A673 (cell line): ENCODE measurements at regions of chr17 and their contacts with region 1.

Region 1: GRCh38 chr17:7583253-7584109 is at the start of gene MPDU1:
- DNase-seq: peak; percentile 99
- H3K4me3 ChIP-seq: peak within 1 kb of the TSS; percentile 60
- H3K27ac ChIP-seq: peak within 1 kb of the TSS; percentile 99
- H3K4me1 ChIP-seq: peaks cover 50% of the 10 kb centered on the region
- H3K27me3 ChIP-seq: no peaks in the 10 kb centered on the region
- CTCF ChIP-seq: no peak
- total RNA-seq, gene MPDU1: 133 and 149 TPM in 2 replicates

Region 2: GRCh38 chr17:7237761-7238419 is 345.6 kb before region 1 on chr17:
- CTCF ChIA-PET with region 1: no interaction called
- POLR2A ChIA-PET with region 1: interaction called, 12 read pairs
- intact Hi-C with region 1: no loop called
- DNase-seq: peak; percentile 84
- H3K4me3 ChIP-seq: peak overlapping the region; percentile 96
- H3K27ac ChIP-seq: peak overlapping the region; percentile 95
- H3K4me1 ChIP-seq: peaks cover 37% of the 10 kb centered on the region
- H3K27me3 ChIP-seq: no peaks in the 10 kb centered on the region
- CTCF ChIP-seq: no peak

Region 3: GRCh38 chr17:7644775-7645174 is 61.3 kb after region 1 on chr17:
- CTCF ChIA-PET with region 1: no interaction called
- POLR2A ChIA-PET with region 1: no interaction called
- intact Hi-C with region 1: no loop called
- DNase-seq: no peak
- H3K4me3 ChIP-seq: no peak overlapping the region
- H3K27ac ChIP-seq: no peak overlapping the region
- H3K4me1 ChIP-seq: no peaks in the 10 kb centered on the region
- H3K27me3 ChIP-seq: no peaks in the 10 kb centered on the region
- CTCF ChIP-seq: no peak

Region 4: GRCh38 chr17:7716901-7717755 is 133.6 kb after region 1 on chr17 and contains the start of gene DNAH2:
- CTCF ChIA-PET with region 1: no interaction called
- POLR2A ChIA-PET with region 1: no interaction called
- intact Hi-C with region 1: no loop called
- DNase-seq: peak; percentile 97
- H3K4me3 ChIP-seq: peak within 1 kb of the TSS; percentile 61
- H3K27ac ChIP-seq: no peak within 1 kb of the TSS
- H3K4me1 ChIP-seq: peaks cover 18% of the 10 kb centered on the region
- H3K27me3 ChIP-seq: no peaks in the 10 kb centered on the region
- CTCF ChIP-seq: peak; percentile 57
- total RNA-seq, gene DNAH2: 0.15 and 0.24 TPM in 2 replicates

Region 5: GRCh38 chr17:7887482-7888183 is 304.2 kb after region 1 on chr17:
- CTCF ChIA-PET with region 1: no interaction called
- POLR2A ChIA-PET with region 1: no interaction called
- intact Hi-C with region 1: loop called (anchors 5 kb)
- DNase-seq: peak; percentile 99
- H3K4me3 ChIP-seq: peak overlapping the region; percentile 87
- H3K27ac ChIP-seq: peak overlapping the region; percentile 96
- H3K4me1 ChIP-seq: peaks cover 37% of the 10 kb centered on the region
- H3K27me3 ChIP-seq: no peaks in the 10 kb centered on the region
- CTCF ChIP-seq: no peak

Region 6: DNA sequence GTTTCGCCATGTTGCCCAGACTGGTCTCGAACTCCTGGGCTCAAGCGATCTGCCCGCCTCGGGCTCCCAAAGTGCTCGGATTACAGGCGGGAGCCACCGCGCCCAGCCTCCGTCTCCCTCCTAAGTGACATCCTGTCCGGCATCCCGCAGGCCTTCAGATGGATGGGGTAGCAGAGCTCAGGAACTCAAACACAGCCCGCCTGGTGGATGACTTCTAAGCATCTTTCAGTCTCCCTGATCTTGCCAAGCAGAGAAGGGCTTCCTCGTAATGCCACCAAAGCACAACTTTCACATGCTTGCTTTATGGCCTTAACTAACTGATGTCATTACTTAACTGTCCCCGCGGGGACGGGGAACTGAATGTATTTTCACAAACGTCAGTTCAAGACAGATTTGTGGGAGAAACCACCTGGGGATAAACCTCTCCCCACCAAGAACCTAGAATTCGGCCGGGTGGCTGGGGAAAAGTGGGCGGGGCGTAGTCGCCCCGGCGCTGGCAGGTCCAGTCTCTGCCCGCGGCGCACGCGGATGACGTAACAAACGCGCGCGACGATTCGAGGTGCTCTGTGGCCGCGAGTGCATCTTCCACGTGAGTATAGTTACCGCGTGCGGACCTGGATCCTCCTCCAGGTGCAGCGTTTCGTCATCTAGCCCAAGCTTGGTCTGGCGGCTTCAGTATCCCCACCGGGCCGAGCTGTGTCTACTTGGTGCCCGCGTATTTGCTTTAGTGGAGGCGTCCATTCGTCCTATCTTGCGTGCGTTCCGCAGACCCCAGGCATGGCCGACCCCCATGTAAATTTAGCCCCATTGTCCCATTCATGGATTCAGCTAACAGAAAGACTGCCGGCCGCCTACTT is 665.5 kb after region 1 on chr17 and contains the start of gene PFAS:
- CTCF ChIA-PET with region 1: no interaction called
- POLR2A ChIA-PET with region 1: interaction called, 12 read pairs
- intact Hi-C with region 1: no loop called
- DNase-seq: peak; percentile 96
- H3K4me3 ChIP-seq: peak within 1 kb of the TSS; percentile 83
- H3K27ac ChIP-seq: peak within 1 kb of the TSS; percentile 97
- H3K4me1 ChIP-seq: peaks cover 10% of the 10 kb centered on the region
- H3K27me3 ChIP-seq: no peaks in the 10 kb centered on the region
- CTCF ChIP-seq: no peak
- total RNA-seq, gene PFAS: 163 and 165 TPM in 2 replicates

Region 7: GRCh38 chr17:8275421-8276290 is 692.2 kb after region 1 on chr17:
- CTCF ChIA-PET with region 1: no interaction called
- POLR2A ChIA-PET with region 1: no interaction called
- intact Hi-C with region 1: no loop called
- DNase-seq: no peak
- H3K4me3 ChIP-seq: no peak overlapping the region
- H3K27ac ChIP-seq: no peak overlapping the region
- H3K4me1 ChIP-seq: no peaks in the 10 kb centered on the region
- H3K27me3 ChIP-seq: no peaks in the 10 kb centered on the region
- CTCF ChIP-seq: no peak